Breast epithelium (tissue), 4 donors: ENCODE measurements at regions of chr16 and their contacts with region 1.

Region 1: GRCh38 chr16:63289852-63290460 is 1253.7 kb upstream of the CDH8 start:
- DNase-seq: no peak
- H3K4me3 ChIP-seq: no peak overlapping the region
- H3K27ac ChIP-seq: no peak overlapping the region
- H3K4me1 ChIP-seq: no peaks in the 10 kb centered on the region
- H3K27me3 ChIP-seq: no peaks in the 10 kb centered on the region
- CTCF ChIP-seq: peak in 1 of 3 donors; percentile 22
- POLR2A ChIP-seq: no peak

Region 2: GRCh38 chr16:62424206-62424605 is 865.8 kb before region 1 on chr16:
- intact Hi-C with region 1: loop called (anchors 10 kb)
- DNase-seq: no peak
- H3K4me3 ChIP-seq: no peak overlapping the region
- H3K27ac ChIP-seq: no peak overlapping the region
- H3K4me1 ChIP-seq: no peaks in the 10 kb centered on the region
- H3K27me3 ChIP-seq: no peaks in the 10 kb centered on the region
- CTCF ChIP-seq: no peak
- POLR2A ChIP-seq: no peak

Region 3: DNA sequence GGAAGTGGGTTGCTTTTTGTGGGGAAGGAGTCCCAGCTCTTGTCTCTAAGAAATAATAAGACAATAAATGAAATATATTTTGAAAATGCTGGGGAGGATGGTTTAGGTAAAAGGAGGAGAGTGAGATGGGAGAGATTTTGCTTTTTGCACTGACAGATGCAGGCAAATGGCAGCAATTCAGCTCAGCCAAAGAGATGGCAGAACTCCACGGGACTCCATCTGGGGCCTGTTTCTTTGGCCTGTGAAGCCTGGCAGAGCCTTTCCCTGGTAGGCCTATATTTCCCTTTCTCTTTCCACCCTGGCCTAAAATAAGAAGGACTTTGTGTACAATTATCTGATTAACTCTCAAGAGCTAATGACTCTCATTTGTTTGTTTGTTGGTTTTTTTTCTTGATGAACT is 306.8 kb after region 1 on chr16:
- intact Hi-C with region 1: loop called (anchors 5 kb)
- DNase-seq: no peak
- H3K4me3 ChIP-seq: no peak overlapping the region
- H3K27ac ChIP-seq: no peak overlapping the region
- H3K4me1 ChIP-seq: no peaks in the 10 kb centered on the region
- H3K27me3 ChIP-seq: no peaks in the 10 kb centered on the region
- CTCF ChIP-seq: no peak
- POLR2A ChIP-seq: no peak